ENCODE measurements at regions of chr4 and their contacts with region 1.

Region 1: DNA sequence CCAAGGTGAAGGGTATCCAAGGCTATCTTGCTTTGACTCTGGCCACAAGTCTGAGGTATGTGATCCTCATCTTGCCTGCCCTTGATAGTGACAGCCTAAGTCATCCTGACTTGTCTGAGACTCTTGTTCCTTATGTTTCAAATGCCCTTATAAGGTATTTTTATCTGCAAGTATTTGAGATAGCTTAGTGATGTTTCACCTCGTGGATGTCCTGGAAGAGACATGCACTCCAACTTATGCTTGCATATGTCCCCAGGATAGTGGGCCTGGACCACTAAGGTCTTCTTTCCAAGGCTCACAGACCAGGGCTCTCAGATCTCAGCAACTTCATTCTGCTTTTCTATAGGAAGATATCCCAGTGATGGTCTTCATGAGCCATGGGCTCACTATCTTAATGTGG is 120.5 kb upstream of the WDR1 start:
- DNase-seq: no peak
- H3K4me3 ChIP-seq: no peak overlapping the region
- H3K27ac ChIP-seq: no peak overlapping the region
- H3K4me1 ChIP-seq: peaks cover 0 to 25% (median 11%) of the 10 kb centered on the region in 4 donors
- H3K27me3 ChIP-seq: no peaks in the 10 kb centered on the region
- CTCF ChIP-seq: no peak
- EP300 ChIP-seq: no peak
- POLR2A ChIP-seq: no peak

Region 2: DNA sequence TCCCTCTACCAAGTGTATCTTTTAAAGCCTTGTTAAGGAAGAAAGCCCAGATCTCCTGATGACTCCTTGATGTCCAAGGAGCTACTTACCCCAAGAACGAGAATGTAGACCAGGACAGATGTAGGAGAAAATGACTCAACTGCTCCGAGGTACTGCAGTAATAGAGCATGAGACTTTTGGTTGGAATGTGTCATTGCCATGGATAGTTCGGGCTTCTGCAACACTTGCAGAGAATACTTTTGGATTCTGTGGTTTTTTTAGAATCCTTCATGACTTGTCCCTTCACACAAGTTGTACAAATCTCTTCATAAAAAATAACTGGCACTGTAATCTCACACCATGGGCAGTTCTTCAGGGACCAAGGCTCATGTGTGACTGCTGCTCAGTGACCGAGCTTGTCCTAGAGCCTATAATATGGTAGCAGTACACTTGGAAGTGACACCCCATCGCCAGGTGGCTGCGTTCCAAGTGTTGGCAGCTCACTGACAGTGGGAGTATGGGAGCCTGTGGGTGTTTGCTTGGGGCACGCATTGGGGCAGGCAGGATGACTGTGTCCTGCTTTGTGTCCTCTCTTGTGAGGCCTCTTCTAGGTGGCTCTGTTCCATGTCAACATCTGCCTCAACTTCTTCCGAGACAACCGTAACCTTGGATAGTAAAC is 32.6 kb before region 1 on chr4:
- intact Hi-C with region 1: loop called (anchors 1 kb)
- DNase-seq: no peak
- H3K4me3 ChIP-seq: no peak overlapping the region
- H3K27ac ChIP-seq: no peak overlapping the region
- H3K4me1 ChIP-seq: no peaks in the 10 kb centered on the region
- H3K27me3 ChIP-seq: no peaks in the 10 kb centered on the region
- CTCF ChIP-seq: no peak
- EP300 ChIP-seq: no peak
- POLR2A ChIP-seq: no peak

Region 3: DNA sequence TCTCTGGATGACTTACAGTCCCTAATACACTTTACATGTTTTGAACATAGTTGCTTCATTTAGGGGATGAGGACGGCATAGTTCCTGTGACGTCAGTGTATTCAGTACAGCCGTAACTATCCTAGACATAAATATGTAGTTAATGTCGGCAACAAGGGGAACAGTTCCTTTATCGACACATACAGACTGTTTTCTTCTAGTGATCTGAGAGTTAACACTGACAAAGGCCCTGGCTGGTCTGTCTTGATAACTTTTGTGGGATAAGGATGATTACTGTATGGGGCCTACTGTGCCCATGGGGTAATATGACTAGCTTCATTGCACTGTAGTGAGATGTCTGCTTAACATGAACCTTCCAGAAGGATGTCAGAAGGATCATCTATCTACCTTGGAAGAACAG is 88.9 kb after region 1 on chr4:
- intact Hi-C with region 1: no loop called
- DNase-seq: no peak
- H3K4me3 ChIP-seq: no peak overlapping the region
- H3K27ac ChIP-seq: no peak overlapping the region
- H3K4me1 ChIP-seq: no peaks in the 10 kb centered on the region
- H3K27me3 ChIP-seq: no peaks in the 10 kb centered on the region
- CTCF ChIP-seq: no peak
- EP300 ChIP-seq: no peak
- POLR2A ChIP-seq: no peak

Region 4: GRCh38 chr4:10582059-10582686 is 345.0 kb after region 1 on chr4:
- intact Hi-C with region 1: no loop called
- DNase-seq: no peak
- H3K4me3 ChIP-seq: no peak overlapping the region
- H3K27ac ChIP-seq: no peak overlapping the region
- H3K4me1 ChIP-seq: peaks cover 0 to 12% (median 3%) of the 10 kb centered on the region in 4 donors
- H3K27me3 ChIP-seq: no peaks in the 10 kb centered on the region
- CTCF ChIP-seq: peak; percentile 40 to 89 (median 78)
- EP300 ChIP-seq: no peak
- POLR2A ChIP-seq: no peak